PC-3 (cell line): ENCODE measurements at regions of chr2 and their contacts with region 1.

Region 1: DNA sequence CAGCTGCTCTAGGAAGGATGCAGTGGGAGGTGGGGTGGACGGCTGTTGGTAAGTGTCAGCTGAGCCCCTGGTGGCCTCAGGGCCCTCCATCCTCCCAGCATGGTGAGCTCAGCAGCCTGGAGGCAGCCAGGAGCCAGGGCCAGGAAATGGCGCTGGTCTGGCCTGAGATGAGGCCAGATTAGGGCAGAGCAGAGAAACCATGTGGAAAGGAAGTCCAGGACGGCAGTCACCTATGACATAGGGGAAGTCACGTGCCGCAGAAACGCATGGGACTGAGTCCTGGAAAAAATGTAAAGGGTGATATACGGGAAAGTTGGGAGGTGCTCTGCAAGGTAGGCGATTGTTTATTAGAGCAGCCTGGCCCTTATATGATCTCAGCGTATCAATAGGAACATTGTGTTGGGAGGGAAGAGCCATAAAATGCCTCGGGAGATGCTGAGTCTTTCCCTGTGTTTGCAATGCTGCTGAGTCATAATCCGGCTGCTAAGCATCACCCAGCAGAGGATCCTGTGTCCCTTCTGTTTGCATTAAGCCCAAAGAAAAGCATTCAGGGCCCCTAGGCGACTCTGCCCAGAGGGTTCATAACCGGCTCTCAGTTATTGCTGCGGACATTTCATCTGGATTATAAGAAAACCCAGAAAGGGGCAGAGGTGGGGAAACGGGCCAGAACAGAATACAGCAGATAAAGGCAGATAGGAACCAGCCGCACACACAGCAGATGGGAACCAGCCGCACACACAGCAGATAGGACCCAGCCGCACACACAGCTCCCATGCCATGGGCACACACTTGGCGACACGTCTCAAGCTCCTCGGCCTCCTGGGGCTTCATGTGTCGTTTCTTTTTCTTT is 30.3 kb upstream of the B3GNT7 start:
- DNase-seq: peak; percentile 98
- ATAC-seq: peak; percentile 93
- H3K4me3 ChIP-seq: no peak overlapping the region
- H3K27ac ChIP-seq: peak overlapping the region; percentile 100
- H3K4me1 ChIP-seq: peaks cover 33% of the 10 kb centered on the region
- H3K27me3 ChIP-seq: no peaks in the 10 kb centered on the region
- CTCF ChIP-seq: no peak

Region 2: DNA sequence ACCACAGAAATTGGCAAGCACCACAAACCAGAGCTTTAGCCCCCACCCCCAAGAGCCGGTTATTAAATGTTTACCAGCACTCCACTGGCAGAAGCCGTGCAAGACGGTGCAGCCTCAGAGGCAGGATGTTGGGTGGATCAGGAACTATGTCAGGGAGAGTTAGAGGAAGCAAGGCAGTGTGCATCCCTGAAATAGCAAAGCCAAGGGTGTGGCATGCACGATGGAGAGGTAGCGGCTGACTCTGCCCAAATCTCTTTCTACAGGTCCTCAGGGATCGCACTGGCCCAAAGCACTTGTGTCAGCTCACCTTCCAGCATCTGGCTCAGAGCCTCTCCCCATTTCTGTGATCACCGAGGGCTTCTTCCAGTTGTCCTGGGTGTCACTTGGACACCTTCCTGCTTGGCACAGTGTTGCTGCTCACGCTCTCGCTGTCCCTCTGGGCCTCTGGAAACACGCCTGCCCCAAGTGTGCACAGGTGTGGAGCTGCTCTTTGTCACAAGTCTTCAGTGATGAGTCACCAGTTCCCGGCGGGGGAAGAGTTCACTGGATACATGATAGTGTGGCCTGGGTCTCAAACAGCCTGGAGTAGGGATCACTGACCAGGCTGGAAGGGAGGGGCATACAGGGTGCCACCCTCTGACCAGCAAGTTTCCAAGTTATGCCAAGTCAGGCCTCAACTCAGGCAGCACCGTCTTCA is 13.0 kb after region 1 on chr2:
- CTCF ChIA-PET with region 1: no interaction called
- POLR2A ChIA-PET with region 1: no interaction called
- intact Hi-C with region 1: loop called (anchors 1 kb)
- DNase-seq: peak; percentile 89
- ATAC-seq: peak; percentile 75
- H3K4me3 ChIP-seq: peak overlapping the region; percentile 34; the same call in 1 of the 2 replicates
- H3K27ac ChIP-seq: peak overlapping the region; percentile 87
- H3K4me1 ChIP-seq: peaks cover 36% of the 10 kb centered on the region
- H3K27me3 ChIP-seq: no peaks in the 10 kb centered on the region
- CTCF ChIP-seq: no peak

Region 3: GRCh38 chr2:231387904-231388724 is 22.9 kb after region 1 on chr2:
- CTCF ChIA-PET with region 1: no interaction called
- POLR2A ChIA-PET with region 1: interaction called, 3 read pairs
- intact Hi-C with region 1: loop called (anchors 1 kb)
- DNase-seq: peak; percentile 90
- ATAC-seq: peak; percentile 89
- H3K4me3 ChIP-seq: no peak overlapping the region
- H3K27ac ChIP-seq: peak overlapping the region; percentile 85
- H3K4me1 ChIP-seq: peaks cover 36% of the 10 kb centered on the region
- H3K27me3 ChIP-seq: no peaks in the 10 kb centered on the region
- CTCF ChIP-seq: peak; percentile 31; the same call in 1 of the 2 replicates

Region 4: GRCh38 chr2:231399853-231400680 is 34.9 kb after region 1 on chr2:
- CTCF ChIA-PET with region 1: interaction called, 11 read pairs
- POLR2A ChIA-PET with region 1: no interaction called
- intact Hi-C with region 1: loop called (anchors 5 kb)
- DNase-seq: peak; percentile 67
- ATAC-seq: peak; percentile 92
- H3K4me3 ChIP-seq: no peak overlapping the region
- H3K27ac ChIP-seq: peak overlapping the region; percentile 66
- H3K4me1 ChIP-seq: peaks cover 37% of the 10 kb centered on the region
- H3K27me3 ChIP-seq: no peaks in the 10 kb centered on the region
- CTCF ChIP-seq: no peak